ENCODE measurements at regions of chr12 and their contacts with region 1.

Region 1: DNA sequence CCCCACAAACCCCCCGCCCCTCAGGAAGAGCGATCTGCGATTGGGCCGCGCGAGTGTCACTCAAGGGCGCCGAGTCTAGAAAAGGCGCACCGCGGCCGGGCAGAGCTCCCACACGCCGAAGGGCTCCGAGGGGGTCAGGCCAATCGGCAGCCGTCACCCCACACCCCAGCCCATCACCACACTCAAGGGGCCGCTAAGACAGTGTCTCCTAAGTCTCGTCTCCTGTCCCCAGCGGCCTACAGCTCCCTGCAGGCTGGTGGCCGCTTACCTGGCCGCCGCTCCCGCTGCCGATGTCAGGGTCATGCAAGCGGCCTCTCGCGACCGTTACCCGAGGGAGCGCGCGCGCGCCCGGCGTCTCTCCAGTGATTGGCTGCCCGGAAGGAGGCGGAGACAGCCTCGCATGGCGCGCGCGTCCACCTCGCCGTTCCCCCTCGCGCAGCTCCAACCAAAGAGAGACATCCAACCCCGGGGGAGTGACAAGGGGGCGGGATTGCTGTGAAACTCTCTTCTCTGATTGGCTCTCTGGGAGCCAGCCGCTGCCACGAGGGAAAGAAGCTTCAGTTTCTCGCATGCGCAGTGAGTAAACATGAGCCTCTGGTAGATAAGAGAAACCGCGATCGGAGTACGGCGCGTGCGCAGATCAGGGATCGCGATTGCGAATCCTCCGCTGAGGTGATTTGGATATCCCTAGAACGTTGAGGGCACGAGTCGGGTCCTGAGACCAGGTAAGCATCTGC is at the starts of genes MPHOSPH9 and MTRFR:
- DNase-seq: peak; percentile 98
- H3K4me3 ChIP-seq: peak within 1 kb of the TSS; percentile 85
- H3K27me3 ChIP-seq: no peaks in the 10 kb centered on the region
- CTCF ChIP-seq: no peak
- polyA plus RNA-seq, gene MPHOSPH9: 7.6 and 13.1 TPM in 2 replicates
- polyA plus RNA-seq, gene MTRFR: 11.6 and 12.7 TPM in 2 replicates

Region 2: GRCh38 chr12:122974274-122974891 is 258.6 kb before region 1 on chr12:
- CTCF ChIA-PET with region 1: interaction called, 13 read pairs
- POLR2A ChIA-PET with region 1: interaction called, 4 read pairs
- DNase-seq: peak; percentile 85
- H3K4me3 ChIP-seq: peak overlapping the region; percentile 97
- H3K27me3 ChIP-seq: no peaks in the 10 kb centered on the region
- CTCF ChIP-seq: no peak

Region 3: GRCh38 chr12:123250484-123251383 is 17.8 kb after region 1 on chr12:
- CTCF ChIA-PET with region 1: interaction called, 22 read pairs
- POLR2A ChIA-PET with region 1: interaction called, 3 read pairs
- DNase-seq: no peak
- H3K4me3 ChIP-seq: no peak overlapping the region
- H3K27me3 ChIP-seq: no peaks in the 10 kb centered on the region
- CTCF ChIP-seq: no peak

Measured in BJ (cell line).